T-cell (primary cell): ENCODE measurements at regions of chr13 and their contacts with region 1.

Region 1: DNA sequence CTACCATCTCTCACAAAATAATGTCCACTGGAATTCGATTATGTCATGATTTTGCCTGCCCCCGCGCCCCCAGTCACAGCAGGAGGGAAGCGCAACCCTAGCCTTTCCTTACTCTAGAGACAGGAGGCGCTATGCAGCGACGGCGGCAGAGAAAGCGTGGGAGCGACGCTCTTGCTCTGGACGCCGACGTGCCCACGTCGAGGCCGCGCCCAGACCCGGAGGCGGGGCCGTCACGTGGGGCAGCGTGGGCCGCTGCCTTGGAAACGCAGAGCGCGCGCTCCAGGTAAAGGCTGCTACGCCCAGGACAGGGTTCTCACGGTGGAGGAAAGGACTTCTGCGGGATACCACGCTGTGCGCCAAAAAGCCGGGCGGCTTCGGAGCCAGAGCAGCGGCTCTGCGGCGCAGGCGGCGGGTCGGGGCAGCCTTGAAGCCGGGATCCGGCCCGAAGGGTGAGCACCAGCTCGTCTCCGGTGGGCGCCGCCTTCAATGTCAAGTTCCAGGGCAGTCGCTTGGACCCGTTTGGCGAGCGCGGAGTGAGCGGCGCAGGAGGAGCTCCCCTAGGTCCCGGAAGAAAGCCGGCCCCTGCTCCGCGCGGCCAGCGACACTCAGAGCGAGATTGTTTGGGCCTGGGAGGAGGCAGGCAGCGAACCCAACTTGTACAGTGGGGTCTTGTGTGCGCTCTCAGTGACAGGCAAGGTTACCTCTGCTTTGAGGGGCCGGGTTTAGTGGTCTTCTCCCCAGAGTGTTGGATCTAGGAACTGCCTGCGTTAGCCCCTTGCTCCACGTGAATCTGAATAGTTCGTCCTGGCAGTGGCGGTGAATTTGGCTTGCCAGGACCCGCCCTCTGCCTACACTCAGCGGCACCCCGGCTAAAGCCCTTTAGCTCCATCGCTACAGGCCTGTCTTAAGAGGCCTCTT is 121.7 kb downstream of the MRPL57 start:
- DNase-seq: peak; percentile 68 to 94 (median 81)
- ATAC-seq: peak; percentile 93 to 96 (median 94)
- H3K4me3 ChIP-seq: peak overlapping the region; percentile 81 to 82
- H3K4me3 Mint-ChIP-seq: peak overlapping the region; percentile 82 to 88 (median 83)
- H3K27ac ChIP-seq: peak overlapping the region; percentile 47
- H3K27ac Mint-ChIP-seq: peak overlapping the region; percentile 85 to 90
- H3K4me1 ChIP-seq: peaks cover 5 to 19% of the 10 kb centered on the region in 2 experiments
- H3K4me1 Mint-ChIP-seq: peaks cover 22 to 24% (median 23%) of the 10 kb centered on the region in 3 donors
- H3K27me3 ChIP-seq: no peaks in the 10 kb centered on the region
- H3K27me3 Mint-ChIP-seq: no peaks in the 10 kb centered on the region

Region 2: GRCh38 chr13:21316376-21316775 is 18.2 kb after region 1 on chr13:
- CTCF ChIA-PET with region 1: no interaction called
- POLR2A ChIA-PET with region 1: no interaction called
- DNase-seq: no peak
- ATAC-seq: no peak
- H3K4me3 ChIP-seq: no peak overlapping the region
- H3K4me3 Mint-ChIP-seq: no peak overlapping the region
- H3K27ac ChIP-seq: no peak overlapping the region
- H3K27ac Mint-ChIP-seq: no peak overlapping the region
- H3K4me1 ChIP-seq: no peaks in the 10 kb centered on the region
- H3K4me1 Mint-ChIP-seq: peaks cover 0 to 2% (median 0%) of the 10 kb centered on the region in 3 donors
- H3K27me3 ChIP-seq: no peaks in the 10 kb centered on the region
- H3K27me3 Mint-ChIP-seq: no peaks in the 10 kb centered on the region

Region 3: DNA sequence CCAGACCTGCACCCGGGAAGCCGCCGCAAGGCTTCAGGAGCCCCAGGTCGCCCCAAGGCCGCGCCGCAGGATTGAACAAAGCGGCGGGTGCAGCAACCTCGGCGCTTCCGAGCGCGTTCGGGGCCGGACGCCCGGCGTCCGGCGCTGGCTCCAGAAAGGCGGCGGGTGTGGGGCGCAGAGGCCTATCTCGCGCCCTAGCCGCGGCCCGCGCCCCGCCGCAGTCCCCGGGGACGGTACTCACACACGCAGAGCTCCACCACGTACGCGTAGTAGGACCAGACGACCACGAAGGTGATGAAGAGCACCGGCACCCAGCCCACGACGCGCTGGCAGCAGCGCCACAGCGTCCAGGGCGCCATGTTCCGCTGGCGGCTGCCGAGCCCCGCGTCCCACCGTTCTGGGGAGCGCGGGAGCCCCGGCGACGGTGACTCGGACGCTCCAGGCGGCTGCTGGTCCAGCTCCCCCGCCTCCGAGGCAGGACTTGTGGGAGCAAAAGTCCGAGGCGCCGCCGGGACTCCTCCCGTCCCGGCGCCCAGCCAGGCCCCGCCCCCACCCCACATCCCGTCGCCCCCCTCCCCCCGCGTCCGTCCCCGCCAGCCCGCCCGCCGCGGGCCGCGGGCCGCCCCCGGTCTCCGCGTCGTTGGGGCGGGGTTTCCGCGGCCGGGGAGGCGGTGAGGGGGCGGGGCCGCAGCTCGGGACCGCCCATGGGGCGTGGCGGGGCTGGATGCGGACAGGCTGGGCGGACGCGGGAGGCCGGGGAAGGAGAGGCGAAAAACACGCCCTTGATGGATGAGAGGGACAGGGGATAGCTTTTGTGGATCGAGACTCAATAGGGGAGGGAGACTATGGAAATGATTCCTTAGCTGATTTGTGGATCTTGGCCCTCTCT is 160.9 kb after region 1 on chr13 and contains the start of gene ZDHHC20:
- CTCF ChIA-PET with region 1: interaction called, 4 to 10 read pairs
- POLR2A ChIA-PET with region 1: interaction called in 1 of 2 experiments, 3 read pairs
- DNase-seq: peak; percentile 49 to 94 (median 80)
- ATAC-seq: peak; percentile 85 to 94 (median 88)
- H3K4me3 ChIP-seq: peak within 1 kb of the TSS; percentile 75 to 94
- H3K4me3 Mint-ChIP-seq: peak within 1 kb of the TSS; percentile 91 to 93 (median 93)
- H3K27ac ChIP-seq: peak within 1 kb of the TSS; percentile 62
- H3K27ac Mint-ChIP-seq: peak within 1 kb of the TSS; percentile 83 to 92
- H3K4me1 ChIP-seq: peaks cover 10 to 12% of the 10 kb centered on the region in 2 experiments
- H3K4me1 Mint-ChIP-seq: peaks cover 36 to 50% (median 40%) of the 10 kb centered on the region in 3 donors
- H3K27me3 ChIP-seq: no peaks in the 10 kb centered on the region
- H3K27me3 Mint-ChIP-seq: no peaks in the 10 kb centered on the region
- total RNA-seq, gene ZDHHC20: 60.1 to 73.8 (median 68.0) TPM

Region 4: DNA sequence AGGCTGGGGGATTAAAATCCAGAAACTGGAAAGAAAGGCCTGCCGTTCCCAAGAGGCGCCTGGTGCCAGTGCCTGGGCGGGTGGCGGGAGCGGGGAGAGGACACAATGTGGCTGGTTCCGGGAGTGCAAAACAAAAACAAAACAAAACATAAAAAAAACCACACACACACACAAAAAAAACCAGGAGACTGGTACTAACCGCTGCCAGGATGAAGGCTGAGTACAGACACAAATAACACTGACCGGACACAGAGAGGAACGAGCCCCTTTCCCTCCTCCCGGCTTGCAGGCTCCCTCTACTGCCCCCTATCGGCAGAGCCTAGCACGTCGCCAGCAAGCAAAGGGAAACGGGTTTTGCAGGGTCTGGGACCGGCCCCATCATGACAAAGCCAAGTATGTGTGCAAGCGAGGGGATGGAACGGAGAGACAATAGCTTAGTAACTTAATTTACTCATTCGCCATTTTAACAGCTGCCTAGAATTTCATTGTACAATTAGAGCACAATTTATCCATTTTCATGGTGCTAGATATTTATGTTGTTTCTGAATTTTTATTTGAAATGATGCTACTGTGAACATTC is 178.8 kb after region 1 on chr13:
- CTCF ChIA-PET with region 1: interaction called, 27 to 29 read pairs
- POLR2A ChIA-PET with region 1: interaction called in 1 of 2 experiments, 5 read pairs
- DNase-seq: peak; percentile 43 to 88 (median 69)
- ATAC-seq: peak; percentile 77 to 84 (median 82)
- H3K4me3 ChIP-seq: peak overlapping the region; percentile 36 to 55
- H3K4me3 Mint-ChIP-seq: peak overlapping the region; percentile 73 to 78 (median 77)
- H3K27ac ChIP-seq: no peak overlapping the region
- H3K27ac Mint-ChIP-seq: peak overlapping the region; percentile 50 to 64
- H3K4me1 ChIP-seq: peaks cover 2 to 6% of the 10 kb centered on the region in 2 experiments
- H3K4me1 Mint-ChIP-seq: peaks cover 14 to 16% (median 15%) of the 10 kb centered on the region in 3 donors
- H3K27me3 ChIP-seq: peaks cover 0 to 4% of the 10 kb centered on the region in 2 experiments
- H3K27me3 Mint-ChIP-seq: no peaks in the 10 kb centered on the region

Region 5: DNA sequence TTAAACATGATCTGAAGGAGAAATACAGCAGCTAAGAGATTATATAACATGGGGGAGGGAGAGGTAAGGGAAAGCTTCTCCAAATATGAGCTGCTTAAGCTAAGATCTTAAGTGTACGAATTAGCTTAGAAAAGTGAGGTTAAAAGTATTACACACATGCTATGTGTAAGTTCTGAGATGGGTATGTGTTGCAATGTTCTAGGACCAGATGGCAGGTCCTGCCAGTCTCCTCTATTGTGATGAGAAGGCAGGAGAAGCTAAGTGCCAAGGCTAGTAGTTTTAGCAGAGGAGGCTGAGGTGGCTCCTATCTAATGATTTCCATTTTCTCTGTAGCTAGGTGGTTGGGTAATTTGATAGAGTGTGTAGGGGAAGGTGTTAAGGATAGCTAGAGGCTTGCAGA is 248.2 kb after region 1 on chr13:
- CTCF ChIA-PET with region 1: no interaction called
- POLR2A ChIA-PET with region 1: no interaction called
- DNase-seq: no peak
- ATAC-seq: no peak
- H3K4me3 ChIP-seq: no peak overlapping the region
- H3K4me3 Mint-ChIP-seq: no peak overlapping the region
- H3K27ac ChIP-seq: no peak overlapping the region
- H3K27ac Mint-ChIP-seq: peak overlapping the region in 1 of 2 donors; percentile 14
- H3K4me1 ChIP-seq: no peaks in the 10 kb centered on the region
- H3K4me1 Mint-ChIP-seq: peaks cover 30 to 52% (median 48%) of the 10 kb centered on the region in 3 donors
- H3K27me3 ChIP-seq: no peaks in the 10 kb centered on the region
- H3K27me3 Mint-ChIP-seq: no peaks in the 10 kb centered on the region